ENCODE measurements at regions of chr19 and their contacts with region 1.

Region 1: GRCh38 chr19:36876993-36877938 is 26.6 kb downstream of the ZNF345 start:
- DNase-seq: no peak
- H3K4me3 ChIP-seq: peak overlapping the region in 1 of 4 donors; percentile 29
- H3K27ac ChIP-seq: no peak overlapping the region
- H3K4me1 ChIP-seq: no peaks in the 10 kb centered on the region
- H3K27me3 ChIP-seq: no peaks in the 10 kb centered on the region
- CTCF ChIP-seq: no peak
- POLR2A ChIP-seq: no peak

Region 2: DNA sequence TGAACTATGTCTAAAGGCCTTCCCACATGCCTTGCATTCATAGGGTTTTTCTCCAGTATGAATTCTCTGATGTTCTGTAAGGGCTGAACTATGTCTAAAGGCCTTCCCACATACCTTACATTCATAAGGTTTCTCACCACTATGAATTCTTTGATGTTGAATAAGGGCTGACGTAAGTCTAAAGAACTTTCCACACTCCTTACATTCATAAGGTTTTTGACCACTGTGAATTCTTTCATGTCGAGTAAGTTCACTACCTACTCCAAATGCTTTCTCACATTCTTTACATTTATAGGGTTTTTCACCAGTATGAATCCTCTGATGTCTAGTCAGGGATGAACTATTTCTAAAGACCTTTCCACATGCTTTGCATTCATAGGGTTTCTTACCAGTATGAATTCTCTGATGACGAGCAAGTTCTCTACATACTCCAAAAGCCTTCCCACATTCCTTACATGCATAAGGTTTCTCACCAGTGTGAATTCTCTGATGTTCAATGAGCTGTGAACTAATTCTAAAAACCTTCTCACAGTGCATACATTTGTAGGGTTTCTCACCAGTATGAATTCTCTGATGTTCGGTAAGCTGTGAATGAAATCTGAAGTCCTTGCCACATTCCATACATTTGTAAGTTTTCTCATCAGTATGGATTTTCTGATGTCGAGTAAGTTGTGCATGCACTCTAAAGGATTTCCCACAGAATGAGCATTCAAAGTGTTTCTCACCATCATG is 330.1 kb before region 1 on chr19:
- intact Hi-C with region 1: loop called in 1 of 2 experiments (anchors 5 kb)
- DNase-seq: no peak
- H3K4me3 ChIP-seq: peak overlapping the region in 1 of 4 donors; percentile 7
- H3K27ac ChIP-seq: no peak overlapping the region
- H3K4me1 ChIP-seq: no peaks in the 10 kb centered on the region
- H3K27me3 ChIP-seq: no peaks in the 10 kb centered on the region
- CTCF ChIP-seq: no peak
- POLR2A ChIP-seq: no peak

Region 3: GRCh38 chr19:36745870-36746269 is 131.4 kb before region 1 on chr19:
- intact Hi-C with region 1: loop called in 1 of 2 experiments (anchors 10 kb)
- DNase-seq: no peak
- H3K4me3 ChIP-seq: no peak overlapping the region
- H3K27ac ChIP-seq: no peak overlapping the region
- H3K4me1 ChIP-seq: no peaks in the 10 kb centered on the region
- H3K27me3 ChIP-seq: no peaks in the 10 kb centered on the region
- CTCF ChIP-seq: no peak
- POLR2A ChIP-seq: no peak

Region 4: GRCh38 chr19:36986601-36987000 is 109.3 kb after region 1 on chr19:
- intact Hi-C with region 1: no loop called
- DNase-seq: no peak
- H3K4me3 ChIP-seq: no peak overlapping the region
- H3K27ac ChIP-seq: no peak overlapping the region
- H3K4me1 ChIP-seq: no peaks in the 10 kb centered on the region
- H3K27me3 ChIP-seq: no peaks in the 10 kb centered on the region
- CTCF ChIP-seq: no peak
- POLR2A ChIP-seq: no peak